A673 (cell line): ENCODE measurements at regions of chr1 and their contacts with region 1.

Region 1: GRCh38 chr1:93814059-93814794 is 64.8 kb downstream of the DNTTIP2 start:
- DNase-seq: peak; percentile 75
- H3K4me3 ChIP-seq: no peak overlapping the region
- H3K27ac ChIP-seq: no peak overlapping the region
- H3K4me1 ChIP-seq: peaks cover 18% of the 10 kb centered on the region
- H3K27me3 ChIP-seq: no peaks in the 10 kb centered on the region
- CTCF ChIP-seq: peak; percentile 85

Region 2: DNA sequence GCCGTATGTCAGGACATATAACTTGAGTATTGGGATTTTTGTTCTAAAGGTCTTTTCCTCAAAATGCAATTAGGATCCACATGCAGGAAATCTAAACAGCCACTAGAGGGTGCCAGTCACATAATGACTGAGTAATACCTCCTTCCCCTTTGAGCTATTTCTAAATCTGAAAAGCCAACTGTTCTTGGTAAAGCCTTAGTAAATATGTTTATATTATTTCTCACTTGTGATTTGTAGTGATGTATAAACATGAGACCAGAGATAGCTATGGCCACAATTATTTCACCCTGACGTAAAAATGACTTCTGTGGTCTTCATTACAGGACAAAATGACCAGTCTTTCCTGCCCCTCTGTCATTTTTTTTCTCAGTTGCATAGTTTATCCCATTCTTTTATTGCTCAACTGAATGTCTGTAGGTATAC is 509.5 kb before region 1 on chr1:
- CTCF ChIA-PET with region 1: interaction called, 4 read pairs
- POLR2A ChIA-PET with region 1: no interaction called
- intact Hi-C with region 1: loop called (anchors 10 kb)
- DNase-seq: peak; percentile 78
- H3K4me3 ChIP-seq: no peak overlapping the region
- H3K27ac ChIP-seq: no peak overlapping the region
- H3K4me1 ChIP-seq: no peaks in the 10 kb centered on the region
- H3K27me3 ChIP-seq: no peaks in the 10 kb centered on the region
- CTCF ChIP-seq: peak; percentile 94

Region 3: DNA sequence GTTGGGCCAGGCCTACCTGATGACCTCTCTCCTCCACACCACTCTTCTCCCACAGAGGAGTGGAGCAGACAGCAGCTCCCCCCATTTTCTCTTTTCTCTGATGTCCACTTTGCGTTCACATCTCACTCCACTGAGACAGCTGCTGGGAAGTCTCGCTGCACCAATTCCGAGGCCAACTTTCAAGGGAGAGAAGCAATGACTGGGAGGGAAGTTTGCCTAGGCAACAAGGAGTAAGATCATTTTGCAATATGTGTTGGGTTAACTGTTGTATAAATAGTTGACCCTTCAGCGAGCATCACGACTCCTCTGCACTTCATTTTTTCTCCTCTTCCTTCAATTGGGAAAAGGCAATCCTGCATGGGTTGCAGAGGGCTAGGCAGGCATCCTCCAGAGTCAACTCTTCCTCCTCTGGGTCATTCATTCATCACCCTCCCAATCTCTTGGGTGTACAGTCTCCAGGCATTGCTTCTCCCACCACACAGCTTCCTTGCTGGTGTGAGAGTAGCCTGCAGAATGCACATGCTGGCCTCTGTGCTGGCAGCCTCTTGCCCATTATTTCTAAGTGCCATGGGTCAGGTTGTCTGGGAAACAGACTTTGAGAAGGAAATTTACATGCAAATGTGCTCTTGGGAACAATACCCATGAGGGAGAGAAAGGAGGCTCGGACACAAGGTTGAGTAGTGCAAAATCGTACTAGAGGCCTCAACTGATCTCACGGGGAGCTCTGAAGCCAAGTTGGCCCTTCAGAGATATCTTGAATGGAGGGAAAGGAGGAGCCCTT is 56.8 kb before region 1 on chr1:
- CTCF ChIA-PET with region 1: interaction called, 10 read pairs
- POLR2A ChIA-PET with region 1: no interaction called
- intact Hi-C with region 1: no loop called
- DNase-seq: no peak
- H3K4me3 ChIP-seq: no peak overlapping the region
- H3K27ac ChIP-seq: no peak overlapping the region
- H3K4me1 ChIP-seq: no peaks in the 10 kb centered on the region
- H3K27me3 ChIP-seq: no peaks in the 10 kb centered on the region
- CTCF ChIP-seq: no peak

Region 4: GRCh38 chr1:93837961-93838360 is 23.7 kb after region 1 on chr1:
- CTCF ChIA-PET with region 1: no interaction called
- POLR2A ChIA-PET with region 1: no interaction called
- intact Hi-C with region 1: no loop called
- DNase-seq: no peak
- H3K4me3 ChIP-seq: no peak overlapping the region
- H3K27ac ChIP-seq: no peak overlapping the region
- H3K4me1 ChIP-seq: no peaks in the 10 kb centered on the region
- H3K27me3 ChIP-seq: no peaks in the 10 kb centered on the region
- CTCF ChIP-seq: no peak